Activated naive CD4-positive, alpha-beta T cell treated with anti-CD3 and anti-CD28 coated beads for 36 hours (primary cell): ENCODE measurements at regions of chr4 and their contacts with region 1.

Region 1: GRCh38 chr4:108030332-108030731 is 40.6 kb downstream of the HADH start:
- DNase-seq: peak; percentile 92
- H3K4me3 Mint-ChIP-seq: peak overlapping the region; percentile 52
- H3K27ac Mint-ChIP-seq: peak overlapping the region; percentile 97
- H3K4me1 Mint-ChIP-seq: peaks cover 70% of the 10 kb centered on the region
- H3K27me3 Mint-ChIP-seq: no peaks in the 10 kb centered on the region

Region 2: DNA sequence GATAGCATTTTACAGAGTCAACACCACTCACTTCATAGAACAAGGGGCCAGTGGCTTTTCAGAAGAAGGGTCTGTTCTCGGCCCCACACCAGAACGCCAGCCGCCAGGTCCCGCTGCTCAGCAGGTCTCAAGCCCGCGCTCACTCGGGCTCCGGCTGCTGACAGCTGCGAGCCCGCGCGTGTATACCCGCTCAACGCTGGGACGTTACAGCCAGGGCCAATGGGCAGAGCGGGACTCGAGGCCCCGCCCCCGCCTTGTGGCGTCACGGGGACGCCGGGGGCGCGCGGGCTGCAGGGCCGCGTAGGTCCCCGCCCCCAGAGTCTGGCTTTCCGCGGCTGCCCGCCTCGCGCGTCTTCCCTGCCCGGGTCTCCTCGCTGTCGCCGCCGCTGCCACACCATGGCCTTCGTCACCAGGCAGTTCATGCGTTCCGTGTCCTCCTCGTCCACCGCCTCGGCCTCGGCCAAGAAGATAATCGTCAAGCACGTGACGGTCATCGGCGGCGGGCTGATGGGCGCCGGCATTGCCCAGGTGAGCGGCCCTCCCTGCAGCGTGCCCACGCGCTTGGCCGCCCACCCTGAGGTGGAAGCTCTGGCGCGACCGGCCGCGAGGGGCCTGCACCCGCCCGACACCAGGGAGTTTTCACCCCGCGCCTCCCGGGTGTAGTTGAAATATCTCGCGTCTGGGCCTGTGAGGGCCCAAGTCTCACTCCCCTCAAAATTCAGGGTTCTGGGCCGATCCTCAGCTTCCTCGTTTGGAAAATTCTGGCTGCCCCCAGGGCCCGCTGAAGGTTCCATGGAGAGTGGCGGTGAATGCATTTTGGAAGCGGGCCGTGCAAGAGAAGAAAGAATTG is 40.6 kb before region 1 on chr4 and contains the start of gene HADH:
- CTCF ChIA-PET with region 1: interaction called, 6 read pairs
- intact Hi-C with region 1: loop called (anchors 1 kb)
- DNase-seq: peak; percentile 94
- H3K4me3 Mint-ChIP-seq: peak within 1 kb of the TSS; percentile 98
- H3K27ac Mint-ChIP-seq: peak within 1 kb of the TSS; percentile 90
- H3K4me1 Mint-ChIP-seq: peaks cover 57% of the 10 kb centered on the region
- H3K27me3 Mint-ChIP-seq: no peaks in the 10 kb centered on the region
- total RNA-seq, gene HADH: 56.1 to 57.6 TPM

Region 3: DNA sequence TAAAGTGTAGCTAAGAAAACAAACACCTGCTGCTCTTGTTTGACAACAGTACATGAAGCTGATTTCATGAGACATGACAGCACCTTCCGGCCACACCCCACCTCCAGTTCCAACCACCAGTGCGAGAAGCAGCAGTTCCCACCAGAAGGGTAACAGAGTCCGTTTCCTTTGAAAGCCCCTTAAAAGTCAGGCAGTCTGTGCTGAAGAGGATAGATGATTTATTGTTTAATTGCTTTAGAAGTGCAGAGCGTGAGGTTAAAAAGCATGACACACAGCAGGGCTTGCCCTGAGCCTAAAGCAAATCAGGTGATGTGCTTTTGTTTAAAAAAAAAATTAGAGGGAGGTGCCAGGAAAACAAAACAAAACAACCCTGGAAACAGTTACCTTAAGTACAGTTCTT is 42.0 kb after region 1 on chr4:
- CTCF ChIA-PET with region 1: interaction called, 7 read pairs
- intact Hi-C with region 1: loop called (anchors 1 kb)
- DNase-seq: peak; percentile 84
- H3K4me3 Mint-ChIP-seq: peak overlapping the region; percentile 38
- H3K27ac Mint-ChIP-seq: peak overlapping the region; percentile 89
- H3K4me1 Mint-ChIP-seq: peaks cover 84% of the 10 kb centered on the region
- H3K27me3 Mint-ChIP-seq: no peaks in the 10 kb centered on the region

Region 4: GRCh38 chr4:108118490-108118889 is 88.2 kb after region 1 on chr4:
- CTCF ChIA-PET with region 1: interaction called, 8 read pairs
- intact Hi-C with region 1: loop called (anchors 1 kb)
- DNase-seq: peak; percentile 58
- H3K4me3 Mint-ChIP-seq: peak overlapping the region; percentile 50
- H3K27ac Mint-ChIP-seq: peak overlapping the region; percentile 96
- H3K4me1 Mint-ChIP-seq: peaks cover 93% of the 10 kb centered on the region
- H3K27me3 Mint-ChIP-seq: no peaks in the 10 kb centered on the region

Region 5: DNA sequence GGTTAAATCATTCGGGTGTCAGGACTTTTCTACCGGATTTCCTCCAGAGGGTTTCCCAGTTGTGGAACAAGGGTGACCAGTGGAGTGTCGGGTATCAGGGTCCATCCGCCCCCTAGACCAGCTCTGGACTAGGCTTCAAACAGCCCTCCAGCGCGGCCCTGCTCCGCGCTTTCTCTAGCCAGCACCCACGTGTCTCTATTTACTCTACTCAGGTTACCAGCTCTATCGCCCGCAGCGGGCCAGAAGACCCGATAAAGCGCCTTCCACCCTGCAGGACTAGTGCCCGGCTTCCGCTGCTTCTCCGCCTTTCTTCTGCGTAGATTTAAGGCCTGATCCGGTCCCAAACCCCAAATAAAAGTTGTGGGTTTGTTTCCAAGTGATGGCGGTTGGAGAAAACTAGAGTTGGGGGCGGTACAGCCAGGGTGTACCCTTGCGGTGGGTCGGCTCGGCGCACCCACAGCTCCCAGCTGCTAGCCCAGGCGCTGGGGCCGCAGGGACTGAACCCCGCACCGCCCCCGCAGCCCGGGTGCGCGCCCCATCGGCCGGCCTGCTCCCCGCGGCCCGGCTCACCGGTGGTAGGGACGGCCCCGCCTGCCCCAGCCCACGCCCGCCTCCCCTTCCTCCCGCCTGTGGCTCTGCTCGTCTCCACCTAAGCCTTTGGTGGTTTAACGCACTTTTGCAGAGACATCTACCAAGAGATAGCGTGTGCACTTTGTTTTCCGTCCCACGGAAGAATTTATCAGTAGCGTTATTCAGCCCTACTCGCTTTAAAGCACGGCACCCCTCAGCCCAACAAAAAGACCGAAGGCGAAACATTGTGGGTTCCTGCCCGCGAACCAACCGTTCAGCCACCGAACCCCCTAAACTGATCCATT is 136.3 kb after region 1 on chr4:
- CTCF ChIA-PET with region 1: interaction called, 8 read pairs
- intact Hi-C with region 1: loop called (anchors 1 kb)
- DNase-seq: peak; percentile 75
- H3K4me3 Mint-ChIP-seq: peak overlapping the region; percentile 88
- H3K27ac Mint-ChIP-seq: peak overlapping the region; percentile 97
- H3K4me1 Mint-ChIP-seq: peaks cover 34% of the 10 kb centered on the region
- H3K27me3 Mint-ChIP-seq: no peaks in the 10 kb centered on the region

Region 6: DNA sequence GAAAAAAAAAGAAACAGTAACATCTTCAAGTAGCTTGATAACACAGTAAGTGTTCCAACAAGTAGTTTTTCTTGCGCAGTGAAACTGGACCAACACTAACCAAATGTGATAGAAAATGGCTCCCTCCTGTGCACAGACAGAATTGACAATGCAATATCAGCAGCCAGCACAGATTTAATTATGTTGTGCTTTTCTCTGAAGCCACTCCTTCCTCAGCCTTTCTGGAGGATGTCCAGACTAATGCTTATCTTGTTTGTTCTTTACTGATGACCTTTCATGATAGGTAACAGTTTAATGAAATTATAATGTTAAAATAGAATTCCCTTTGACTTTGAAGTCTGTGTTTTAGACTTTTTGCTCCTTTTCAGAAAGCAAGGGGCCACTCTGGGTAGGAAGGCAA is 442.9 kb after region 1 on chr4:
- CTCF ChIA-PET with region 1: no interaction called
- intact Hi-C with region 1: loop called (anchors 2 kb)
- DNase-seq: peak; percentile 48
- H3K4me3 Mint-ChIP-seq: no peak overlapping the region
- H3K27ac Mint-ChIP-seq: no peak overlapping the region
- H3K4me1 Mint-ChIP-seq: peaks cover 27% of the 10 kb centered on the region
- H3K27me3 Mint-ChIP-seq: no peaks in the 10 kb centered on the region

Region 7: DNA sequence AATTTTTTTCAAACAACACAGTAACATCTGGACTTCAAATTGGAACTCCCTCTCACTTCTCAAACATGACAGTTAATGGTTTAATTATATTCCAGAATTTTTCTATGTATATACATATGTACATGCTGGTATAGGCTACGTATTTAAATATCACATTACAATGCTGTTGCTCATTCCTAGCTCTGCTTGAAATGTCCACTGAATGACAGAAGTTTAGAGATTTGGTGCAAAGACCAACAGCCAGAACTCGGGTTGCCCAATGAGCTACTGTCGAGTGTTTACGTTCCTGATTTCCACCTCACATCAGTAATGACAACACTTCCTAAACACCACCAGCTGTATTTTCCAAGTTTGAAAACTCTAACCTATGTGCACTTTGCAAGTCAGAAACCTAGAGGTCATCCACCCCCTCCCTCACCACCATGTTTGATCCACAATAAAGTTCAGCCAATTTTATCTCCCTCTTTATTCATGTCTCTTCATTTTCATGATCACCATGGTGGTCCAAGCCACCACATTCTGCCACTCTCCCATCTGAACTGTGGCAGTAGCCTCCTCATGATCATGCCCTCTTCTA is 540.7 kb after region 1 on chr4:
- CTCF ChIA-PET with region 1: interaction called, 56 read pairs
- intact Hi-C with region 1: loop called (anchors 1 kb)
- DNase-seq: no peak
- H3K4me3 Mint-ChIP-seq: no peak overlapping the region
- H3K27ac Mint-ChIP-seq: no peak overlapping the region
- H3K4me1 Mint-ChIP-seq: peaks cover 24% of the 10 kb centered on the region
- H3K27me3 Mint-ChIP-seq: no peaks in the 10 kb centered on the region